AG04449 (cell line): ENCODE measurements at regions of chr9 and their contacts with region 1.

Region 1: GRCh38 chr9:92140074-92140753 is 25.0 kb upstream of the SPTLC1 start:
- DNase-seq: no peak
- H3K4me3 ChIP-seq: peak overlapping the region; percentile 12; the same call in 1 of the 2 replicates
- CTCF ChIP-seq: peak; percentile 99

Region 2: DNA sequence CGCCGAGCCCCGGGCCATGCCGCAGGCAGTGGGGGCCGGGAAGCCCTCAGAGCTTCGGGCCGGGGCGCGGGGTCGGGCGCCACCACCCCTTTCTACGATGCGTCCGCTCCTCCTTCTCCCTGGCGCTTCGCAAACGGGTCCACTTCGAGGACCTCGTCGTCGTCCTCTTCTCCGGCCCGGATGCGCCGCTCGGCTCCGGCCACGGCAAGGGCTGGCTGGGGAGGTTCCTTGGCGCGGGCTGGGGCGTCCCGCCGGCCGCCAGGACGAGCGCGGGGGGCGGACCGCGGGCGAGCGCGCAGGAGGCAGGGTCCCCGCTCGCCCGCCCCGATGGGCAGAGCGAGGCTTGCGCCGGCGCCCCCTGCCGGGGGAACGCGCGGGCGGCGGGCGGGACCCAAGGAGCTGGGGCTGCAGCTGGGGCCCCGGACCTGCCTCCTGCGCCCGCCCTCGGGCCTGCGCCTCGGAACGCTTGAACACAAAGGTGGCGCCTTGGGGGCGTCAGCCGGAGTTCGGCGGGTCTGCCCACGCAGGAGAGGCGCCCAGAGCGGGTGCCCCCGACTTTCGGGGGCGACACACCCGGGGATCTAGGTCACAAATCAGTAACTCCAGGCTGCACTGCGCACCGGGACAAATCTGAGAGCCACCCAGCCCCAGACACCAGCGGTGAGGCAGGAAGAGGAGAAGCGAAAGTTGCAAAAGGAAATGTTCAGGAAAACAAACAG is 190.1 kb before region 1 on chr9 and contains the start of gene ROR2:
- CTCF ChIA-PET with region 1: interaction called, 13 read pairs
- POLR2A ChIA-PET with region 1: no interaction called
- DNase-seq: no peak
- H3K4me3 ChIP-seq: peak within 1 kb of the TSS; percentile 60
- CTCF ChIP-seq: peak; percentile 48

Region 3: DNA sequence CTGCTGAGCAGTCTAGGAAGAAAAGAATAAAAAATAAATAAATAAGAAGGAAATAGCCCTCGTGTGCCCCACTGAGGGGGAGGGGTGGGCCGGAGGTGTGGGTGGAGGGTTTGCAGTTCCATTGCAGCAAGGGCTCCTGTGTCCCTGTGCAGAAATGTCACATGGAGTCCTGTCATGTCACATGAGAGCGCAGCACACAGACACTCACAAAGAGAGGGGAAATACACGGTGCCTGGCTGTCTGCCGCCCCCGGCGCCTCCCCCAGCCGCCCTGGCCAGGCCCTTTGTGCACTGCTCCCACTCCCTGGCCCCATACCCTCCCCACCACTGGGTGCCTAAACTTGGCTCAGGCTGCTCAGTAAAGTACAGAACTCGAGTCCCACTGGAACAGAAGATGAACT is 30.6 kb after region 1 on chr9:
- CTCF ChIA-PET with region 1: interaction called, 15 read pairs
- POLR2A ChIA-PET with region 1: no interaction called
- DNase-seq: no peak
- H3K4me3 ChIP-seq: no peak overlapping the region
- CTCF ChIP-seq: no peak

Region 4: GRCh38 chr9:92206488-92206887 is 66.3 kb after region 1 on chr9:
- CTCF ChIA-PET with region 1: interaction called, 66 read pairs
- POLR2A ChIA-PET with region 1: no interaction called
- DNase-seq: no peak
- H3K4me3 ChIP-seq: no peak overlapping the region
- CTCF ChIP-seq: no peak

Region 5: DNA sequence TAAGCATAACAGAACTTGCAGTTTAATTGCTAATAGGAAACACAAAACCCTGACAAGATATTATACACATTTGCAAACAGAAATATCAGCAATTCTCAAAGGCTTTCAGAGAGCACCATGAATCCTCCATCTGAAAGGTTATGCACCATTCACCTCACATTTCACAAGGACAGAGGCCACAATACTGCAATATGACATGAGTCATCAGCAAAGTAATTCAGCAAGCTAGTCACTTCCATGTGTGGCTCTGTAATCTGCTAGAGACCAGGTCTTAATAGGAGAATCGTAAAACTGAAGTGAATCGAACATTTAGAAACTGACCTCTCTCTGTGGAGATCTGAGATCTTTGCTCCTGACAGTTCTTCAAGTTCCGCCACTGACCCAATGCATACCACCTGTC is 124.9 kb after region 1 on chr9:
- CTCF ChIA-PET with region 1: interaction called, 27 read pairs
- POLR2A ChIA-PET with region 1: no interaction called
- DNase-seq: no peak
- H3K4me3 ChIP-seq: no peak overlapping the region
- CTCF ChIP-seq: no peak

Region 6: GRCh38 chr9:92325269-92325990 is 185.2 kb after region 1 on chr9 and contains the starts of genes CENPP and NOL8:
- CTCF ChIA-PET with region 1: interaction called, 31 read pairs
- POLR2A ChIA-PET with region 1: interaction called, 3 read pairs
- DNase-seq: peak; percentile 38
- H3K4me3 ChIP-seq: peak within 1 kb of the TSS; percentile 90
- CTCF ChIP-seq: no peak